ENCODE measurements at regions of chr4 and their contacts with region 1.

Region 1: DNA sequence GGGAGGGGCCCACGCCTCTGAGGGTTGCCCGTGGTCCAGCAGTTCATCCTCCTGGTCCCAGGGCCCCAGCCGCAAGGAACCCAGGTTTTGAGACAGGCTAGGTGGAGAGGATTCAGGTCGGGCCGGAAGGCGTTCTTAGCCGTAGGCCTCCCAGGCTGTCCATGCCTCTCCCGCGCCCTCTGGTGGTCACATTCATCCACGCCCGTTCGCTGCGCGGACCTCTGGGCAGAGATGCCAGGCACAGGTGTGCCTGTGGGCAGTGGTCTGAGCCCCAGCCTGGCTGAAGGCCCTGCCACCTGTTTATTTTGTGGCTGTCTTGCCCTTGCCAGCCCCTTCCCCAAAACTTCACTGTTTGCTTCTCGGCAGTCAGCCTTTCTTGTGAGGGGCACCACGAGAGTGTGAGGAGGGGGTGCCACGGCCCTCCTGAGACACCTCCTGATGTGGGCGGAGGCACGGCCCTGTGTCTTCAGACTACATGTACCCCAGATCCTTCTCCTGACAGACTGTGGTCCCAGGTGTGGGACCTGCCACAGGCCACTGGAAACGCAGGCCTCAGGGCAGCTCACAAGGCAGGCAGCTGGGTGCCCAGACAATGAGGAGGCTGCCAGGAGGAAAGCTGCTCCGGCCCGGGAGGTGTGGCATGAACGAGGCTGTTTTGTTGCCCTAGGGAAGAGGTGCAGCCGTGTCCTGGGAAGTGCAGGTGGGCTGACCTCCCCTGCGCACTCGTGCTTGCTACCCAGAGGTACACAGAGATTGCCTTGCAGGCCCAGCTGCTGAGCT is 5.0 kb downstream of the UVSSA start:
- DNase-seq: peak; percentile 75 to 99 (median 91)
- ATAC-seq: peak; percentile 30 to 61 (median 56)
- H3K4me3 ChIP-seq: no peak overlapping the region
- H3K27ac ChIP-seq: no peak overlapping the region
- H3K4me1 ChIP-seq: peaks cover 7 to 13% (median 8%) of the 10 kb centered on the region in 3 donors
- H3K27me3 ChIP-seq: no peaks in the 10 kb centered on the region
- CTCF ChIP-seq: peak; percentile 88 to 98 (median 96)

Region 2: GRCh38 chr4:1512738-1513660 is 161.0 kb after region 1 on chr4:
- intact Hi-C with region 1: loop called in 2 of 3 experiments (anchors 5 kb)
- DNase-seq: peak in 5 of 6 donors; percentile 25 to 87 (median 65)
- ATAC-seq: peak; percentile 85 to 92 (median 92)
- H3K4me3 ChIP-seq: peak overlapping the region in 2 of 4 donors; percentile 21 to 38
- H3K27ac ChIP-seq: no peak overlapping the region
- H3K4me1 ChIP-seq: no peaks in the 10 kb centered on the region
- H3K27me3 ChIP-seq: no peaks in the 10 kb centered on the region
- CTCF ChIP-seq: peak; percentile 26 to 67 (median 54)

Region 3: DNA sequence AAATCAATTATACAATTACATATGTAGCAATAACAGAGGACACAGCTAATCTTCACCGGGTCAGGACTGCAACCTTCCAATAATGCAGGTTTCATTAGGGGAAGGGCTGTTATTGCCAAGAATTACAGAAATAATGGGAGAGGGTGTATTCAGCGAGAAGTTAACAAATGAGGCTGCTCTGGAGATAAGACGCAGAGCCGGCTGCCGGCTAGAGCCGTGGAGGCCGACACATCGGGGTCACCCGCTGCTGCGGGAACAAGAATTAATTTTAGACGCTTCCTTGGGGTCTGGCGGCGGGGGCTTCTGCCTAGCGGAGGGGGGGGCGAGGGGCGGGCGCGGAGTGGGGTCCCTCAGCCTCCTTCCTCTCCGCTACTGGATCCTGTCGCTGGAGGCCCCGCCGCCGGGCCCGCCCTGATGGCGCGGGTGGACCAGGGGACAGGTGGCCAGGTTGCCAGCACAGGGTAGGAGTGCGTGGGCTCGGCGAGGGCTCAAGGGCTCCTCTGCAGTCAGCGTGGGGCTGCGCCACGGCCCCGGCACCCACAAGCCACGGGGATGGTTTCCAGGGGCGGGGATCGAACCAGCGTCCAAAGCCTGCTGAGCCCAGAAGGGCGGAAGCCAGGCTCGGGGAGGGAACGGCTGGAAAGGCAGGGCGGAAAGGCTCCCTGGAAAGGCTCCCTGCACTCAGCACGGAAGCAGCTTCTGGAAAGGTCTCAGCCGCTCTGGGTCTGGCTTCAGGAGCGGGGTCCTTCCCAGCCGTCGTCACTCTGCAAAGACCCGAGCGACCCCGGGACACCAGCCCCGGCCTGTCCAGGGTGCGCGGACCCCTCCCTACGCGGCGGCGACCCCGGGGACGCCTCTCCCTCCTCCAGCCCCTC is 168.0 kb after region 1 on chr4:
- intact Hi-C with region 1: loop called in 1 of 3 experiments (anchors 5 kb)
- DNase-seq: peak in 3 of 6 donors; percentile 11 to 66 (median 54)
- ATAC-seq: peak in 1 of 4 donors; percentile 45
- H3K4me3 ChIP-seq: no peak overlapping the region
- H3K27ac ChIP-seq: no peak overlapping the region
- H3K4me1 ChIP-seq: no peaks in the 10 kb centered on the region
- H3K27me3 ChIP-seq: no peaks in the 10 kb centered on the region
- CTCF ChIP-seq: no peak

Region 4: DNA sequence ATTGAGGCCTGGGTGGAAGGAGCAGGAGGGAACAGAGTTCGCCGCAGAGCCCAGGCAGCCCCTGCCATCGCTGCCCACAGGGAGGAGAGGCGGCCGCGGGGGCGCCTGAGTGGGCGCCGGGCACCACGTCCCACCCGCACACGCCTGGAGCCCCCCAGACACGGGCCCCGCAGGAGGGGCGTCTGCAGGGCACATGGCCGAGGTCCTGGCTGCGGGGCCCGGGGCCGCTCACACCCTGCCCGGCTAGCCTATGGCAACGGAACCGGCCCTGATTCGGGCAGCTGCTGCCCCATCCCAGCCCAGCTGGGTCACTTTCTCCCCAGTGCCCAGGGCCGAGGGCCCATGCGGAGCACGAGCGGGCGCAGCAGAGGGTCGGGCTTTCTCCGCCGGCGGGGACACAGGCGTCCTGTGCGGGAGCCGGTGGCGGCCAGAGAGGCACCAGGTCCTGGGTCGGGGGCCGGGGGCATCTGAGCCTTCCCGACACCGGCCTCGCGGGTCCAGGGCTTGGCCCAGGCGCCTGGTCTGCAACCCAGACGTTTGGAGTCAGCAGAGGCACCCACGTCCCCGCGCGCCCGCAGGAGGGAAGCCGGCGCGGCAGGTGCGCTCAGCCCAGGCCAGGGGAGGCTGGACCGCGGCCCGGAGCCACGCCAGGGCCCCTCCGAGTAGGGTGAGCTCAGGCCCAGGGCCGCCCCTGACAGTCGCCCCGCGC is 240.8 kb after region 1 on chr4:
- intact Hi-C with region 1: no loop called
- DNase-seq: peak in 3 of 6 donors; percentile 14 to 54 (median 48)
- ATAC-seq: no peak
- H3K4me3 ChIP-seq: no peak overlapping the region
- H3K27ac ChIP-seq: no peak overlapping the region
- H3K4me1 ChIP-seq: no peaks in the 10 kb centered on the region
- H3K27me3 ChIP-seq: no peaks in the 10 kb centered on the region
- CTCF ChIP-seq: no peak

Region 5: DNA sequence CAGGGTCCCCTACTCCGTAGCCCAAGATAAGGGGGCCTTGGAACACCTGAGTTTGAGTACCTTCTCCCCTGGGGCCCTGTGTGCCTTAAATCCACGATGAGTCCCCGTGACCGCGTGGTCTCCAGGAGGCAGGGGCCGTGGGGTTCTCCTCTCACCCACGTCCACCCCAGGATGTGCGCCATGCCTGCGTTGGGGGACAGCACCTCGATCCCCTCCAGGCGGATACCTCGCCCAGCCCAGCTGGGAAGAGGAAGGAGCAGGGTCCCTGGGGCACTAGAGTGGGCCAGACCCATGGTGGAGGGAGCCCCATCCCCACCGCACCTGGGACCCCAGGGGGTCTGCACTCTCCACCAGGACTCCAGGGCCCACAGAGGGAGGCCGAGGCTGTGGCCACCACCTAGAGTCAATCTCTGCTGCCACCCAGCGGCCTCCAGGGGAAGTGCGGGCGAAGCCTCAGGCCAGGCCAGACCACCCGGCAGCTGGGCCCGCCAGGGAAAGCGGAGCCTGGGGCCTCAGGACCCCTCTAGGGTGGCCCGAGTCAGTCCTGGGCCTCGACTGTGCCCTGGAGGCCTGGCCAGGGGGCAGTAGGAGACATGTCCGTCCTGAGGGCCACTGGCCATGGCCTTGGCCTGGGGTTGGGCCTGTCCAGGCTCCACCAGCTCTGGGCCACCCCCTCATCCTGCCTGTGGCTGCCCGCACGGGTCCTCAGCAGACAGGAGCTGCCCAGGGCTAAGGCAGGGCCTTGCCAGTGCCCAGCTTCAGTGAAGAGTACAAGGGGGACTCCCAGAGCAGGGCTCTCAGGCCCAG is 277.1 kb after region 1 on chr4:
- intact Hi-C with region 1: loop called in 2 of 3 experiments (anchors 5 to 10 kb)
- DNase-seq: peak; percentile 20 to 88 (median 68)
- ATAC-seq: peak; percentile 69 to 94 (median 86)
- H3K4me3 ChIP-seq: no peak overlapping the region
- H3K27ac ChIP-seq: no peak overlapping the region
- H3K4me1 ChIP-seq: no peaks in the 10 kb centered on the region
- H3K27me3 ChIP-seq: no peaks in the 10 kb centered on the region
- CTCF ChIP-seq: peak; percentile 96 to 98 (median 96)

Measured in pancreas (tissue), 10 donors.